ENCODE measurements at regions of chr12 and their contacts with region 1.

Region 1: DNA sequence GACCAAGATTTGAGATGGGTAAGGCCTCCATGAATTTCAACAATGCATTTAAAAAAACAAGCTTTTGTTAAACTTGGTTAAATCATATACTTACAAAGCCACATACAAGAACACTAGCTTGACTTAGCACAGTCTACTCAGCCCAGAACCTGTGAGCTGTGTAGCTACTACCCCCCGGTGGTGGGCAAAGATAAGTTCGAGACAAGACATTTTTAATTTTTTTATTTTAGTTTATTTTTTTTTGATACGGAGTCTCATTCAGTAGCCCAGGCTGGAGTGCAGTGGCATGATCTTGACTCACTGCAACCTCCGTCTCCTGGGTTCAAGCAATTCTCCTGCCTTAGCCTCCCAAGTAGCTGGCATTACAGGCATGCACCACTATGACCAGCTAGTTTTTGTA is 3.7 kb upstream of the NECAP1 start:
- DNase-seq: peak; percentile 28
- H3K4me3 Mint-ChIP-seq: no peak overlapping the region
- H3K27ac Mint-ChIP-seq: no peak overlapping the region
- H3K4me1 Mint-ChIP-seq: peaks cover 30% of the 10 kb centered on the region
- H3K27me3 Mint-ChIP-seq: no peaks in the 10 kb centered on the region

Region 2: GRCh38 chr12:7188562-7189397 is 889.6 kb before region 1 on chr12:
- intact Hi-C with region 1: loop called (anchors 1 kb)
- DNase-seq: peak; percentile 49
- H3K4me3 Mint-ChIP-seq: peak overlapping the region; percentile 93
- H3K27ac Mint-ChIP-seq: peak overlapping the region; percentile 98
- H3K4me1 Mint-ChIP-seq: peaks cover 31% of the 10 kb centered on the region
- H3K27me3 Mint-ChIP-seq: peaks cover 4% of the 10 kb centered on the region

Region 3: GRCh38 chr12:7877420-7877819 is 201.0 kb before region 1 on chr12:
- intact Hi-C with region 1: no loop called
- DNase-seq: no peak
- H3K4me3 Mint-ChIP-seq: no peak overlapping the region
- H3K27ac Mint-ChIP-seq: no peak overlapping the region
- H3K4me1 Mint-ChIP-seq: no peaks in the 10 kb centered on the region
- H3K27me3 Mint-ChIP-seq: peaks cover 19% of the 10 kb centered on the region

Region 4: DNA sequence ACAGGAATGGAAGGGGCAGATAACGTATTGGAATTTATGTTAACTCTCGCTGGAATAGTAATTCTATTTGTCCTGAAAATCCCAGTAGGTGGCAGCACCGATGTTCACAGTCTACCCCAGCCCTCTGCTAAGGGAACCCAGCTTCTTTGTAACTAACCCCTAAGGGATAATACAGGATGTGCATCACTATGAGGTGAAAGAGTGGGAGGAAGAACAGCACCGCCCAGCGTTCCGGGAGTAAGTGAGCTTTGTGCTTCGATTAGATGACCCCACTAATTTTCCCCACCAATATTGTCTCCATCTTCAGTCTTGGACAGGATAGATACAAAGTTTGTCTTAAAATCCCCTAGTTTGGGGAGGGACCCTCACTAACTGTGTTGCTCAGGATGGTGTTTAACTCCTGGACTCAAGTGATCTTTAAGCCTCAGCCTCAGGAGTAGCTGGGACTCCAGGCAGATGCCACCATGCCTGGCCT is 145.1 kb before region 1 on chr12:
- intact Hi-C with region 1: loop called (anchors 1 kb)
- DNase-seq: peak; percentile 64
- H3K4me3 Mint-ChIP-seq: no peak overlapping the region
- H3K27ac Mint-ChIP-seq: no peak overlapping the region
- H3K4me1 Mint-ChIP-seq: peaks cover 36% of the 10 kb centered on the region
- H3K27me3 Mint-ChIP-seq: no peaks in the 10 kb centered on the region

Region 5: GRCh38 chr12:7970475-7971252 is 107.7 kb before region 1 on chr12:
- intact Hi-C with region 1: loop called (anchors 2 kb)
- DNase-seq: peak; percentile 85
- H3K4me3 Mint-ChIP-seq: peak overlapping the region; percentile 98
- H3K27ac Mint-ChIP-seq: peak overlapping the region; percentile 100
- H3K4me1 Mint-ChIP-seq: peaks cover 40% of the 10 kb centered on the region
- H3K27me3 Mint-ChIP-seq: no peaks in the 10 kb centered on the region

Region 6: GRCh38 chr12:8032242-8033152 is 45.9 kb before region 1 on chr12 and contains the start of gene FOXJ2:
- intact Hi-C with region 1: loop called (anchors 1 kb)
- DNase-seq: peak; percentile 72
- H3K4me3 Mint-ChIP-seq: peak within 1 kb of the TSS; percentile 90
- H3K27ac Mint-ChIP-seq: peak within 1 kb of the TSS; percentile 85
- H3K4me1 Mint-ChIP-seq: peaks cover 56% of the 10 kb centered on the region
- H3K27me3 Mint-ChIP-seq: no peaks in the 10 kb centered on the region
- total RNA-seq, gene FOXJ2: 19.9 and 20.7 TPM in 2 replicates

Region 7: DNA sequence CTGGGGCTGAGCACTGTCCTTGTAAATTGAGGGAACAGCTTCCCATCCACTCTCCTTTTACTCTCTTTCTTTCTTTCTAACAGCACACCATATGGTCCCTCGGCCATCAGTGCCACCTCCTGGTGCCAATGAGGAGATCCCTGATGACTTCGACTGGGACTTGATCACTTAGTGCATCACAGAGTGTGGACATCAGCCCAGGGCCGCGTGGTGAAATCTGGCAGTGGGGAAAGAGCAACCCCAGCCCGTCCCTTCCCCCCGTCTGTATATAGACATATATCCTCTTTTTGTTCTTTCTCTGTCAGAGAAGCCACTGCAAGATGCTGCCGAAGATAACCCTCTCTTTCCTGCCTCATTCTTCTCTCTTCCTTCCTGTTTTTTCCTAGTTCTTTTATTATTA is 25.7 kb before region 1 on chr12:
- intact Hi-C with region 1: no loop called
- DNase-seq: no peak
- H3K4me3 Mint-ChIP-seq: no peak overlapping the region
- H3K27ac Mint-ChIP-seq: no peak overlapping the region
- H3K4me1 Mint-ChIP-seq: peaks cover 10% of the 10 kb centered on the region
- H3K27me3 Mint-ChIP-seq: no peaks in the 10 kb centered on the region

Region 8: DNA sequence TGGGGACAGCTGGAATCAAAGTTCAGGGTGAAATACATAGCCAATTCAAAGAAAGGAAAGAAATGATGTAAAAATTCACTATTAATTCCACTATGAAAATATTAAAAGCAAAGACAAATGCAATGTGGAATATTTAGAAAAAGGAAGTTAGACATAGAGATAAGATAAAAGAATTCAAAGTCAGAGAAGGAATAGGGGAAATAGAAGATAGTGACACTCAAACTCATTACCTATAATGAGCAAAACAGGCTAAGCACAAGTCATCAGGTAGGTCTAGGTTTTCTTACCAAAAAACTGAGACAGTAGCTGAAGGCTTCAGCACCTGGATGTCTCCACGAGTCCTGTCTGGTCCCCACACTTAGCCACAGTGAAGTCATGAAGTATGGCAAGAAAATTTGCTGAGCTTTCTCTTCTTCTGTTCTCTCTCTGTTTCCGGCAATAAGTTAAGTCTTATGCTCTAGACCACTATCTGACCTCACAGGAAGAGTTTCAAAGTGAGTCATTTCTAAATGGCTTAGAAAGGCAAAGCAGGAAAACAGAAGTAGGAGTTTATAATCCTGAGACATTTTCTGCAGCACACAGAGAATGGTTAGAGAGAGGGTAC is 12.3 kb before region 1 on chr12 and contains the start of gene C3AR1:
- intact Hi-C with region 1: loop called (anchors 1 kb)
- DNase-seq: peak; percentile 43
- H3K4me3 Mint-ChIP-seq: peak within 1 kb of the TSS; percentile 56
- H3K27ac Mint-ChIP-seq: peak within 1 kb of the TSS; percentile 79
- H3K4me1 Mint-ChIP-seq: peaks cover 35% of the 10 kb centered on the region
- H3K27me3 Mint-ChIP-seq: no peaks in the 10 kb centered on the region
- total RNA-seq, gene C3AR1: 0.60 and 0.71 TPM in 2 replicates

Region 9: GRCh38 chr12:8088574-8088973 is 10.2 kb after region 1 on chr12:
- intact Hi-C with region 1: no loop called
- DNase-seq: peak; percentile 20
- H3K4me3 Mint-ChIP-seq: peak overlapping the region; percentile 75
- H3K27ac Mint-ChIP-seq: peak overlapping the region; percentile 81
- H3K4me1 Mint-ChIP-seq: peaks cover 40% of the 10 kb centered on the region
- H3K27me3 Mint-ChIP-seq: no peaks in the 10 kb centered on the region